ENCODE measurements at regions of chr7 and their contacts with region 1.

Region 1: DNA sequence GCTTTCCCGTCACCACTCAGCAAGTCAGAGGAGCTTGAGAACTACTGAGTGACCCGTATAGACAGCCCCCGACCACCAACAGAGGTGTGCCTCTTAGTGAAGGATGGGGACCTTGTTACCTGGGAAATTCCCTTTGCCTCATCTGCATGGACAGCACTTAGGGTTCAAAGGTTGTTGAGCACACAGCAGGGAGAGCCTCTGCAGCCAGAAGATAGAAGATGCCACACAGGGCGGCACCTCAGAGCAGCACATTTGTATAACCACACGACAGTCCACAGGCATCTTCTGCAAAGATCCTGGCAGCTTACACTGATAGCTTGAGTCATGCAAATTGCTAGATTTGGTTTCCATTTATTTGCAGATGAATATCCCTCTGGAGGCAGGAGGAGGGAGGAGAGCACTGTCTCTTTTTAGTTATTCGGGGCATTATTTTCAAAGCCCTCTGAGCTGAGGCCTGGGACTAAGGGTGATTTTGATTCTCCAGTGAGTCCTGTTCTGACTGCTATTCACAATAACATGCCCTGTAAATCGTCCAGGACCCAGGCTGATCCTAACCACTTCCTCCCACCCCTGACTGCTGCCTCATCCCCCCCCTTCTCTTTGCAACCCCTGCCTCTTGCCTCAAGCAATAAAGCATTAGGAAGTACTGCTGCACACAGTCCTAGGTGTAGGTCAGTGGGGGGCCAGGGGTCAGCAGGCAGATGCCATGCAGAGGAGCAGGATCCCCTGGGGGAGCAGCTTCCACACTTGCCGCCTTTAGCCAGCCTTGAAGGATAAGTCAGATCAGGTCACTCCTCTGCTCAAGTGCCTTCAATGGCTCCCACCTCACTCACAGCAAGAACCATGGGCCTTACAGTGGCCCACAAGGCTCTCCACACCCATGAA is 24.6 kb upstream of the INMT start:
- DNase-seq: no peak
- H3K4me3 ChIP-seq: no peak overlapping the region
- H3K27ac ChIP-seq: no peak overlapping the region
- H3K4me1 ChIP-seq: no peaks in the 10 kb centered on the region
- H3K27me3 ChIP-seq: no peaks in the 10 kb centered on the region
- CTCF ChIP-seq: no peak
- POLR2A ChIP-seq: no peak

Region 2: GRCh38 chr7:30625283-30625682 is 102.0 kb before region 1 on chr7:
- intact Hi-C with region 1: loop called (anchors 10 kb)
- DNase-seq: no peak
- H3K4me3 ChIP-seq: no peak overlapping the region
- H3K27ac ChIP-seq: no peak overlapping the region
- H3K4me1 ChIP-seq: no peaks in the 10 kb centered on the region
- H3K27me3 ChIP-seq: no peaks in the 10 kb centered on the region
- CTCF ChIP-seq: no peak
- POLR2A ChIP-seq: no peak